Colonic mucosa (tissue), 4 donors: ENCODE measurements at regions of chr19 and their contacts with region 1.

Region 1: GRCh38 chr19:4457654-4458395 is at the start of gene UBXN6:
- DNase-seq: peak; percentile 98
- H3K4me3 ChIP-seq: peak within 1 kb of the TSS; percentile 63
- H3K27ac ChIP-seq: peak within 1 kb of the TSS; percentile 69
- H3K4me1 ChIP-seq: peaks cover 6% of the 10 kb centered on the region
- H3K27me3 ChIP-seq: no peaks in the 10 kb centered on the region
- CTCF ChIP-seq: no peak
- total RNA-seq, gene UBXN6: 84.9 to 96.7 TPM

Region 2: DNA sequence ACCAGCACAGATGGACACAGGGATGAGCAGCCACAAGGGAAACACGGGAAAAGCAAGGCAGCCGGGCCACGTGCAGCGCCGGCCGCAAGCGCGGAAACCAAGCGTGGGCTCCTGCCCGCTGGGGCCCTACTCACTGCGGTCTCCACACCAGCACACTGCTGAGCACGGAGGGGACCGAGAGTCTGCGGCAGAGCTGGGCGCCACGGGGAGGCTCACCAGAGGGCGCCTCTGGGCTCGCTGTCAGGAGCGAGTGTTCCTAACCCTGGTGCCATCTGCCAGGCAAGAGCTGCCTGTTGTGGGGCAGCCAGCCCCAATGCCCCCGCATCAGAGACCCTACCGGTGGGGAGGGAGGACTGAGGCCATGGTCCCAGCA is 88.0 kb before region 1 on chr19:
- intact Hi-C with region 1: no loop called
- DNase-seq: peak; percentile 68
- H3K4me3 ChIP-seq: peak overlapping the region; percentile 30
- H3K27ac ChIP-seq: peak overlapping the region; percentile 82
- H3K4me1 ChIP-seq: peaks cover 32% of the 10 kb centered on the region
- H3K27me3 ChIP-seq: no peaks in the 10 kb centered on the region
- CTCF ChIP-seq: no peak

Region 3: GRCh38 chr19:4400135-4400936 is 57.5 kb before region 1 on chr19 and contains the start of gene SH3GL1:
- intact Hi-C with region 1: loop called (anchors 10 kb)
- DNase-seq: peak; percentile 92
- H3K4me3 ChIP-seq: peak within 1 kb of the TSS; percentile 96
- H3K27ac ChIP-seq: peak within 1 kb of the TSS; percentile 92
- H3K4me1 ChIP-seq: peaks cover 13% of the 10 kb centered on the region
- H3K27me3 ChIP-seq: no peaks in the 10 kb centered on the region
- CTCF ChIP-seq: peak; percentile 70
- total RNA-seq, gene SH3GL1: 54.0 to 66.6 TPM

Region 4: DNA sequence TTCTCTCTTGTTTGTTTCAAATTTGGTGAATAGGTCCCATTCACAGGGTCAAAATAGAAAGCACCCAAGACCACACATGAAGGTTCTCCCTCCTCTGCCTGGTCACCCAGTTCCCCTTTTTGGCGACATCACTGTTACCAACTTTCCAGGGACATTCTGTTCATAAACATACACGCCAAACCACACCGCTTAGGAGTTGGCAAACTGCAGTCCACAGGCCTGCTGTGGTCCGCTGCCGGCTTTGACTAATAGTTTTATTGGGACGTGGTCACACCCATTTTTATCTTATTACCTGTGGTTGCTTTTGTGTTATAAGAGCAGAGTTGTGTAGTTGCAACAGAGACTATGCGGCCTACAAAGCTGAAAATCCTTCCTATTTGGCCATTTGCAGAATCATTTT is 475.7 kb after region 1 on chr19:
- intact Hi-C with region 1: no loop called
- DNase-seq: no peak
- H3K4me3 ChIP-seq: no peak overlapping the region
- H3K27ac ChIP-seq: no peak overlapping the region
- H3K4me1 ChIP-seq: no peaks in the 10 kb centered on the region
- H3K27me3 ChIP-seq: no peaks in the 10 kb centered on the region
- CTCF ChIP-seq: no peak